ENCODE measurements at regions of chr2 and their contacts with region 1.

Region 1: GRCh38 chr2:38665854-38666555 is at the start of gene GALM:
- DNase-seq: peak in 1 of 2 donors; percentile 73
- ATAC-seq: peak; percentile 37 to 59 (median 53)
- H3K4me3 ChIP-seq: peak within 1 kb of the TSS; percentile 85
- H3K4me3 Mint-ChIP-seq: peak within 1 kb of the TSS; percentile 81
- H3K27ac ChIP-seq: peak within 1 kb of the TSS; percentile 59
- H3K27ac Mint-ChIP-seq: peak within 1 kb of the TSS; percentile 73 to 87
- H3K4me1 ChIP-seq: peaks cover 32% of the 10 kb centered on the region
- H3K4me1 Mint-ChIP-seq: peaks cover 32 to 35% of the 10 kb centered on the region in 2 donors
- H3K27me3 ChIP-seq: no peaks in the 10 kb centered on the region
- H3K27me3 Mint-ChIP-seq: no peaks in the 10 kb centered on the region
- CTCF ChIP-seq: no peak
- total RNA-seq, gene GALM: 4.0 to 12.4 (median 11.0) TPM

Region 2: DNA sequence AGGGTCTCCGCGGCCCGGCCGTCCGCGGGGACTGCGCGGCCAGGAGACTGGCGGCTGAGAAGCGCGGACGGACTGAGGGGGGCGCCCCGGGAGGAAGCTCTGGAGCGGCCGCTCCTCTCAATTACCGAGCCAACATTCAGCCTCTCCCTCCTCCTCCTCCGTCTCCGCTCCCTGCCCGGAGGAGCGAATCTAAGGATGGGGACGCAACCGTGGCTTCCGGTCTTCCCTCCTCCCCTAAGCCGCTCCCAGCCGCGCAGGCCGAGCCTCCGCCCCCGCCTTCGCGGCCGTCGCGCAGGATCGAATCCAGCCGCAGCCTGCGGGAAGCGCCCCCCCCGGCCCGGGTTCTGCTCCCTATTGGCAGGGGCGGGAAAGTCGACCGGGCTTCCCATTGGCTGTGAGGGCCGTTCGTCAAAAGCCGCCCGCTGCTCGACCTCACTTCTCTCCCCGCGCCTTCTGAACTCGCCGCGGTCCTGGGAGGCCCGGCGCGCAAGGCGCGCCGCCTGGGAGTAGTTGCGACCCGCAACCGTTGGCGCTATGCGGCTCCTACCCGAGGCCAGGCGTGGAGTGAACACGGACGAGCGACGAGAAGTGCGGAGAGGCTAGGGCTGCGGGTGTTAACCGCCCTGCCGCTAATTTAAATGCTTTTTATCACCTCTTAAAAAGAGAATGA is 63.1 kb before region 1 on chr2 and contains the start of gene HNRNPLL:
- intact Hi-C with region 1: loop called (anchors 5 kb)
- DNase-seq: peak; percentile 77 to 93
- ATAC-seq: peak; percentile 75 to 85 (median 77)
- H3K4me3 ChIP-seq: peak within 1 kb of the TSS; percentile 85
- H3K4me3 Mint-ChIP-seq: peak within 1 kb of the TSS; percentile 90
- H3K27ac ChIP-seq: peak within 1 kb of the TSS; percentile 64
- H3K27ac Mint-ChIP-seq: peak within 1 kb of the TSS; percentile 75 to 77
- H3K4me1 ChIP-seq: peaks cover 16% of the 10 kb centered on the region
- H3K4me1 Mint-ChIP-seq: peaks cover 13 to 23% of the 10 kb centered on the region in 2 donors
- H3K27me3 ChIP-seq: peaks cover 2% of the 10 kb centered on the region
- H3K27me3 Mint-ChIP-seq: peaks cover 14 to 16% of the 10 kb centered on the region in 2 donors
- CTCF ChIP-seq: no peak
- total RNA-seq, gene HNRNPLL: 7.3 to 18.4 (median 8.8) TPM

Region 3: DNA sequence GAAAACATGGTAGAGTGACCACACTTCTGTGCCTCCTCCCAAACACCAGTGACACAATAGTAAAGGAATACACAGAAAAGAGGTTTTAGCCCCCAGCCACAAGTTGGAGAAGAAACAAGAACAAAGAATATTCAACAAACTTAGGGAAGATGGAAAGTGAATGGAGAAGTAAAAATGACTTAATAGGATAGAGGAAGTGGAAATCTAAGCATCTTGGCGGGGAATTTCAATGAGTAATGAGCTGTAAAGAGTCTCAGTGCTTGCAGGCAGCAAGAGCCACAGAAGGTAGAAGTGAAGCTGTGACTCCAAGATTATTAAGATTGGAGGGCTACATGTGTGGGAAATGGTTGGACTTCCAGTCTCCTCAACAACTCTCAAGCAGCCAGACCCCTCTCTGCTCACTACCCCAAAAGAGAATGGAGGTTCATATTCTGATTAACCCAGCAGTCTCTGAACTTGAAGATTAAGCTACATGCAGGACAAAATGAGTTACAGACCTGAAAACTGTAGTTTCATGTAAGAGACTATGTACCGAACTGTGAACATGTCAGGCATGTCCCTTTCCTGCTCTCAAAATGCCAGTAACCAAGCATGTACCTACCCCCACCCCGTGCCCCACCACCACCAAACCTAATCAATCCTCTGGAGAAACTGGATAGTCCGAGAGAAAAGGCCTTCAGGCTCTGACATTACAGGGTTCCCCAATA is 46.4 kb before region 1 on chr2:
- intact Hi-C with region 1: no loop called
- DNase-seq: no peak
- ATAC-seq: no peak
- H3K4me3 ChIP-seq: no peak overlapping the region
- H3K4me3 Mint-ChIP-seq: no peak overlapping the region
- H3K27ac ChIP-seq: no peak overlapping the region
- H3K27ac Mint-ChIP-seq: no peak overlapping the region
- H3K4me1 ChIP-seq: no peaks in the 10 kb centered on the region
- H3K4me1 Mint-ChIP-seq: no peaks in the 10 kb centered on the region
- H3K27me3 ChIP-seq: no peaks in the 10 kb centered on the region
- H3K27me3 Mint-ChIP-seq: peaks cover 4 to 23% of the 10 kb centered on the region in 2 donors
- CTCF ChIP-seq: no peak

Region 4: DNA sequence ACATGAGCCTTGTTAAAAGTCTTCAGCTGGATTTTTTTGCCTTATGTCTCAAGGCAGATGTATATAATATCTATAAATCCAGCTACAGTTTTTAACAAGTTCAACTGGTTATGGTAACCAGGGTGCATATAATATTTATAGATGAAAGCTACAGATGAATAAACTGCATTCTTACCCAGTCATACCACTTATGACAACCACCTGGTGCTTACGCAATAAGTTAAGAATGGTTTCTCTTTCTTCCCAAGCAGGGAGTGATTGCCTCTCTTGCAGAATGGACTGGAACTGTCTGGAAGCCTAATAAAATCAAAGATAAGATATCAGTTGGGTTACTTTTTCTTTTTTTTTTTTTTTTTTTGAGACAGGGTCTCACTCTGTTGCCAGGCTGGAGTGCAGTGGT is 190.2 kb after region 1 on chr2:
- intact Hi-C with region 1: no loop called
- DNase-seq: no peak
- ATAC-seq: no peak
- H3K4me3 ChIP-seq: no peak overlapping the region
- H3K4me3 Mint-ChIP-seq: no peak overlapping the region
- H3K27ac ChIP-seq: no peak overlapping the region
- H3K27ac Mint-ChIP-seq: no peak overlapping the region
- H3K4me1 ChIP-seq: no peaks in the 10 kb centered on the region
- H3K4me1 Mint-ChIP-seq: no peaks in the 10 kb centered on the region
- H3K27me3 ChIP-seq: no peaks in the 10 kb centered on the region
- H3K27me3 Mint-ChIP-seq: no peaks in the 10 kb centered on the region
- CTCF ChIP-seq: no peak

Measured in natural killer cell (primary cell).